Activated CD4-positive, alpha-beta T cell treated with anti-CD3 and anti-CD28 coated beads, Interleukin-2, amount 10 ng/mL, durations not matched to agents 24 days and 14 days (primary cell): ENCODE measurements at regions of chr7 and their contacts with region 1.

Region 1: DNA sequence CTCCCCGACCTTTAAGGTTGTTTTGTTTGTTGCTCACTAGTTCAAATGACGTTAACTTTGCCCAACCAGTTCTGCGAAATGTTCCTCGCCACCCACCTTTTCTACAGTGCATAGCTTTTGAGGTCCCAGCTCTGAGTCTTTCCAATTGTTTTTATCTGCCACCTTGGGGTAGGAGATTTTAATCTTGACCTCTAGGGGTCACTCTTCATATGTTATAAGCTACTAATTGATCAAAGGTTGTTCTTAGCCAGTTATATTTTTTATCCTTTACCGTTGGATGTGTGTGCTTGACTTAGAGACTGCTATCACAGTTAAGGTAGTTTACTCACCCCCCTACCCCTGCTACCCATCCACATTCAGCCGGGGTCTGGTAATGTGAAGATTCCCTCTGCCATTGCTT is 372.4 kb downstream of the SUGCT start:
- DNase-seq: no peak
- H3K4me3 Mint-ChIP-seq: no peak overlapping the region
- H3K27ac Mint-ChIP-seq: no peak overlapping the region
- H3K4me1 Mint-ChIP-seq: no peaks in the 10 kb centered on the region
- H3K27me3 Mint-ChIP-seq: peaks cover 2% of the 10 kb centered on the region

Region 2: GRCh38 chr7:40356871-40357709 is 150.1 kb before region 1 on chr7:
- intact Hi-C with region 1: no loop called
- DNase-seq: no peak
- H3K4me3 Mint-ChIP-seq: no peak overlapping the region
- H3K27ac Mint-ChIP-seq: no peak overlapping the region
- H3K4me1 Mint-ChIP-seq: no peaks in the 10 kb centered on the region
- H3K27me3 Mint-ChIP-seq: no peaks in the 10 kb centered on the region

Region 3: GRCh38 chr7:41696314-41696916 is 1189.2 kb after region 1 on chr7:
- intact Hi-C with region 1: loop called (anchors 5 kb)
- DNase-seq: peak; percentile 71
- H3K4me3 Mint-ChIP-seq: no peak overlapping the region
- H3K27ac Mint-ChIP-seq: no peak overlapping the region
- H3K4me1 Mint-ChIP-seq: peaks cover 4% of the 10 kb centered on the region
- H3K27me3 Mint-ChIP-seq: peaks cover 34% of the 10 kb centered on the region